Vagina (tissue), 2 donors: ENCODE measurements at regions of chr17 and their contacts with region 1.

Region 1: DNA sequence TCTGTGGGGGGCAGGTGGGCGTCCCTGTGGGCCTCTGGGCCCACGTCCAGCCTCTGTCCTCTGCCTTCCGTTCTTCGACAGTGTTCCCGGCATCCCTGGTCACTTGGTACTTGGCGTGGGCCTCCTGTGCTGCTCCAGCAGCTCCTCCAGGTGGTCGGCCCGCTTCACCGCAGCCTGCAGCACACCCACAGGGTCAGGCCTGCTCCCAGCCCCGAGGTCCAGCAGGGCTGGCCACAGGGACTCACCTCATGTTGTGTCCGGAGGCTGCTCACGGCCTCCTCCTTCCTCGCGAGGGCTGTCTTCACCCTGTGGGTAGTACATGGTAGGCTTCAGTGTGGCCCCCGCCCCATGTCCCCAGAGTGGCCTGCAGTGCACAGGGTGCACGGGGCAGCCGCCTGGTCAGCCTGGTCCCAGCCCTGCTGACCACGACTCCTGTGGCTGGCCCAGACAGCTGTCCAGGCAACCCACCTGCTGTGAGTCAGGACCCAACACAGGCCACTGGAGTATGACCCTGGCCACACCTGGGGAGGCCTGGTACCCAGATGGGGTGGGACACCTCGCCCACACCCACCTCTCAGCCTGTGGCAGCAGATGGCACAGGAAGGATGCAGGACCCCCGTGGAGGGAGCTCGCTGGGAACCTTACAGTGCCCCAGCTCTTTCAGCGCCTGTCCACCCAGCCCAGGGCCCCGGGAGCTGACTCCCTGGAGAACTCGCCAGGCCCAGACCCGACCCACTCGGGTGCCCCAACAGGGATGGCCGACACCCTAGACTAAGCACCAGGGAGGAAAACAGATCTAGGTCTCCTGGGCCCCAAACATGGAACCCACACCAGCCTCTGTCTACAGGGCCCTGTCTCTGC is 23.9 kb upstream of the AATK start:
- DNase-seq: no peak
- H3K4me3 ChIP-seq: no peak overlapping the region
- H3K27ac ChIP-seq: no peak overlapping the region
- H3K4me1 ChIP-seq: no peaks in the 10 kb centered on the region
- H3K27me3 ChIP-seq: no peaks in the 10 kb centered on the region
- CTCF ChIP-seq: no peak
- POLR2A ChIP-seq: no peak

Region 2: GRCh38 chr17:81002409-81003361 is 187.2 kb before region 1 on chr17:
- intact Hi-C with region 1: loop called (anchors 10 kb)
- DNase-seq: no peak
- H3K4me3 ChIP-seq: no peak overlapping the region
- H3K27ac ChIP-seq: peak overlapping the region; percentile 11
- H3K4me1 ChIP-seq: peaks cover 31% of the 10 kb centered on the region
- H3K27me3 ChIP-seq: no peaks in the 10 kb centered on the region
- CTCF ChIP-seq: no peak
- POLR2A ChIP-seq: no peak

Region 3: GRCh38 chr17:81213978-81214377 is 24.1 kb after region 1 on chr17:
- intact Hi-C with region 1: loop called (anchors 1 kb)
- DNase-seq: no peak
- H3K4me3 ChIP-seq: no peak overlapping the region
- H3K27ac ChIP-seq: no peak overlapping the region
- H3K4me1 ChIP-seq: no peaks in the 10 kb centered on the region
- H3K27me3 ChIP-seq: no peaks in the 10 kb centered on the region
- CTCF ChIP-seq: no peak
- POLR2A ChIP-seq: no peak